ENCODE measurements at regions of chr15 and their contacts with region 1.

Region 1: DNA sequence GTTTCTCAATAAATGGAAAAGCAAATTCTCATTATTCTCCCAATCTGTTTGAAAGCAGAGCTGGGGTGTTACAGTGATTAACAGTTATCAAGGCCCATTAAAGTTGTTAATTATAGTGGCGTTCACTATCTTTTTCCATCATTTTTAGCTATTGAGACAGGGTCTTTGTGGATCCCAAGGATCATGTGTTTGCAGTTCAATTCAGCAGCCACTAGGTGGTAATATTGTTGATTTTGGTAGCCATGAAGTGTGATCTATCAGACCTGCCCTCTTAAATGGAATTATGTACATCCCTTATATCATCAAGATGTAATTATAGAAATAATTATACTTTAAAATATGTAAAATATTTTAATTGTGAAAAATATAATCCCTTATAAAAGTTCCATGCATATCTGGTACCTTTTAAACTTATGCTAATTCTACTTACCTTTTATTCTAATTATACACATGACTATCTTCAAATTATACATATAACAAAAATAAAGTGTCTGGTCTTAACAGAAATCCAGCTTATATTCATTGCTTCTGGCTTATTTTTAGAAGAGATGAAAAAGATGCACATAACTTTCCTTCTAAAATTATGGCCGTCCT is 126.4 kb downstream of the GREM1 start:
- DNase-seq: peak; percentile 51
- H3K4me3 ChIP-seq: no peak overlapping the region
- H3K27ac ChIP-seq: no peak overlapping the region
- H3K4me1 ChIP-seq: no peaks in the 10 kb centered on the region
- H3K27me3 ChIP-seq: no peaks in the 10 kb centered on the region
- CTCF ChIP-seq: peak; percentile 45 to 61
- POLR2A ChIP-seq: no peak

Region 2: DNA sequence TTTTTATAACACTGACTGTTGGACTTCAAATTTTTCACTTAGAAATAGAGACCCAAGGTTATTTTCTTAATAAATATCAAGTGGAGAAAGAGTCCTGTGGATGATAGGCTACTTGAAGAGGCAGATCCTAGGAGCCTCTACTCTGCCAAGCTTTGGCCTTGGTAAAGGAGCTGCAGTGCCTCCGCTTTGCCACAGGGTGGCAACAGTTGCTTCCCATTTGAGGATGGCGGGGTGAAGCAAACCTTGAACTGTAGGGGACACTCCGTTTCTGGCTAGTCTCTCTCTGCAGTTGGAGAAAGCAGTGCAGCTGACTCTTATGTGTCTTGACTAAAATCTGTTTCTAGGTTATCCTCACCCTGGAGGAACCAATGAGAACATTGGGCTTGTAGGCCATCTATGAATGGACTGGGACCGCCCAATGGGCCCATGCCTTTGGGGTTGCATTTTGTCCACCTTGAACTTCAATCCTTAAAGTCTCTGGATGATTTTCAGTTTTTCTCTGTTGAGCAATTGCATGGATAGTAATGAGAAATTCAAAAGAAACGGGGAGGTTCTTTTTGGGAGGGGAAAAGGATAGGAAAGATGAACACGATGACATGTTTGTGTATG is 192.9 kb before region 1 on chr15:
- CTCF ChIA-PET with region 1: interaction called, 10 read pairs
- POLR2A ChIA-PET with region 1: no interaction called
- dilution Hi-C with region 1: no loop called
- intact Hi-C with region 1: no loop called
- DNase-seq: peak; percentile 54
- H3K4me3 ChIP-seq: no peak overlapping the region
- H3K27ac ChIP-seq: no peak overlapping the region
- H3K4me1 ChIP-seq: peaks cover 8% of the 10 kb centered on the region
- H3K27me3 ChIP-seq: no peaks in the 10 kb centered on the region
- CTCF ChIP-seq: peak; percentile 88 to 93
- POLR2A ChIP-seq: no peak

Region 3: DNA sequence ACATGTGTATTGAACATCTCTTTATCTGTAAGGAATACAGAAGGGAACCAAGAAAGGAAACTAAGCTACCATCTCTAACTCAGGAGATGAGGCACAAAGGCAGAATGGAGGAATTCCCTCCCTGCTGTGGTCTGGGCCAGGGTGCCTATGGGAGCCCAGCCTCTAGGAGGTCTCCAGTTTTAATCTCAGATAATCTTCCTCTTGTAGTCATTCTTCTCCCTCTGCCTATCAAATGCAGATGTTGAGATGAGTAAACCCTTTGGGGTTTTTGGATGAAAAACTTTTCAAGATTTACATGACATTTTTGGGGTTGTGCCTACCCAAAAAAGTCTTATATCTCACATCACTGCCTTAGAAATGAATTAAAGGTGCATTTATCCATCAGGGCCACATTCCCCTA is 179.4 kb before region 1 on chr15:
- CTCF ChIA-PET with region 1: interaction called, 51 read pairs
- POLR2A ChIA-PET with region 1: no interaction called
- dilution Hi-C with region 1: no loop called
- intact Hi-C with region 1: loop called (anchors 1 kb)
- DNase-seq: no peak
- H3K4me3 ChIP-seq: no peak overlapping the region
- H3K27ac ChIP-seq: no peak overlapping the region
- H3K4me1 ChIP-seq: no peaks in the 10 kb centered on the region
- H3K27me3 ChIP-seq: no peaks in the 10 kb centered on the region
- CTCF ChIP-seq: no peak
- POLR2A ChIP-seq: no peak

Region 4: GRCh38 chr15:32855942-32856341 is 11.7 kb after region 1 on chr15:
- CTCF ChIA-PET with region 1: interaction called, 62 read pairs
- POLR2A ChIA-PET with region 1: no interaction called
- dilution Hi-C with region 1: no loop called
- intact Hi-C with region 1: no loop called
- DNase-seq: peak; percentile 94
- H3K4me3 ChIP-seq: no peak overlapping the region
- H3K27ac ChIP-seq: peak overlapping the region; percentile 85
- H3K4me1 ChIP-seq: peaks cover 34% of the 10 kb centered on the region
- H3K27me3 ChIP-seq: no peaks in the 10 kb centered on the region
- CTCF ChIP-seq: no peak
- POLR2A ChIP-seq: peak; percentile 28

Region 5: GRCh38 chr15:32908135-32908801 is 64.1 kb after region 1 on chr15:
- CTCF ChIA-PET with region 1: interaction called, 16 read pairs
- POLR2A ChIA-PET with region 1: no interaction called
- dilution Hi-C with region 1: no loop called
- intact Hi-C with region 1: no loop called
- DNase-seq: peak; percentile 60
- H3K4me3 ChIP-seq: no peak overlapping the region
- H3K27ac ChIP-seq: no peak overlapping the region
- H3K4me1 ChIP-seq: no peaks in the 10 kb centered on the region
- H3K27me3 ChIP-seq: peaks cover 0 to 4% of the 10 kb centered on the region in 2 experiments
- CTCF ChIP-seq: no peak
- POLR2A ChIP-seq: no peak

Region 6: DNA sequence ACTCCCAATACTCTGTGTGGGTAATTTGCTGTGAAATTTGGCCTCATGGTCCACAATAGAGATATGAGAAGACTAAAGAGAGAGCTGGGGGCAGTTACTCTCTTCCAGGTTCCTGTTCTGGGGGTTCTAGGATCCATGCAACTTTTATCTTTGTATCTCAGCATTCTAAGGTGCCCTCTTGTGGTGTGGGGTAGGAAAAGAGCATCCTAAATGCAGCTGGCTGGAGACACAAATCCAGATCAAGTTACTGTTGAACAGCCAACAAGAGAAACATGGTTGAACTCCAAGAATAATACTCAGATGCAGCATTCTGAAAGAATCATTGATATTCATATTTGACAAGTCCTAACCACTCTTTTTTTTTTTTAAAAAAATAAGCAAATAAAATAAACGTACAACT is 111.8 kb after region 1 on chr15:
- CTCF ChIA-PET with region 1: interaction called, 162 read pairs
- POLR2A ChIA-PET with region 1: no interaction called
- dilution Hi-C with region 1: no loop called
- intact Hi-C with region 1: loop called (anchors 1 kb)
- DNase-seq: peak; percentile 51
- H3K4me3 ChIP-seq: no peak overlapping the region
- H3K27ac ChIP-seq: no peak overlapping the region
- H3K4me1 ChIP-seq: no peaks in the 10 kb centered on the region
- H3K27me3 ChIP-seq: peaks cover 3 to 6% of the 10 kb centered on the region in 2 experiments
- CTCF ChIP-seq: peak; percentile 43 to 46
- POLR2A ChIP-seq: no peak

Region 7: GRCh38 chr15:33132722-33133345 is 288.6 kb after region 1 on chr15:
- CTCF ChIA-PET with region 1: interaction called, 26 read pairs
- POLR2A ChIA-PET with region 1: no interaction called
- dilution Hi-C with region 1: no loop called
- intact Hi-C with region 1: loop called (anchors 2 kb)
- DNase-seq: peak; percentile 68
- H3K4me3 ChIP-seq: no peak overlapping the region
- H3K27ac ChIP-seq: no peak overlapping the region
- H3K4me1 ChIP-seq: peaks cover 10% of the 10 kb centered on the region
- H3K27me3 ChIP-seq: peaks cover 5% of the 10 kb centered on the region in 2 experiments
- CTCF ChIP-seq: peak; percentile 68 to 78
- POLR2A ChIP-seq: no peak

Measured in endothelial cell of umbilical vein (primary cell).